Thyroid gland (tissue), 4 donors: ENCODE measurements at regions of chr21 and their contacts with region 1.

Region 1: DNA sequence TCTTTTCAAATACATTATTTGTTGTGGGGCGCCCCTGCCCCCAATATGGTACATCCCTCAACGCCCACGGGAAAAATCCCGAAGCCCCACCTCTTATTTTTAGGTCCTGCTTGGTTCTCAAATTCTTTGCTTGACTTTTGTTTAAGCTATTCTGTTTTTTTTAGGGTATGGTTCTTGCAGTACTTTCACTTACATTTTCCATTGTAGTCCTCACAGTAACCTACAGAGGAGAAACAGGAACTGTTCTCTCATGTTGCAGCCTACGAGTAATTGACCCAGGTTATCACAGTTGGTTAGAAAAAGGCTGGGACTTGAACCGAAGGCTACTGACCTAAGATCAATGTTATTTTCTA is 697 bp upstream of the C21orf91 start:
- DNase-seq: no peak
- H3K4me3 ChIP-seq: peak overlapping the region in 2 of 3 donors; percentile 91 to 99
- H3K27ac ChIP-seq: peak overlapping the region; percentile 91 to 96 (median 94)
- H3K4me1 ChIP-seq: no peaks in the 10 kb centered on the region
- H3K27me3 ChIP-seq: no peaks in the 10 kb centered on the region
- CTCF ChIP-seq: no peak
- POLR2A ChIP-seq: no peak

Region 2: GRCh38 chr21:17537299-17537698 is 282.6 kb before region 1 on chr21:
- intact Hi-C with region 1: no loop called
- DNase-seq: no peak
- H3K4me3 ChIP-seq: no peak overlapping the region
- H3K27ac ChIP-seq: peak overlapping the region in 1 of 3 donors; percentile 6
- H3K4me1 ChIP-seq: peaks cover 16 to 28% of the 10 kb centered on the region in 2 donors
- H3K27me3 ChIP-seq: no peaks in the 10 kb centered on the region
- CTCF ChIP-seq: no peak
- POLR2A ChIP-seq: no peak

Region 3: GRCh38 chr21:17768840-17769446 is 50.9 kb before region 1 on chr21:
- intact Hi-C with region 1: loop called (anchors 10 kb)
- DNase-seq: no peak
- H3K4me3 ChIP-seq: no peak overlapping the region
- H3K27ac ChIP-seq: no peak overlapping the region
- H3K4me1 ChIP-seq: no peaks in the 10 kb centered on the region
- H3K27me3 ChIP-seq: no peaks in the 10 kb centered on the region
- CTCF ChIP-seq: no peak
- POLR2A ChIP-seq: no peak

Region 4: DNA sequence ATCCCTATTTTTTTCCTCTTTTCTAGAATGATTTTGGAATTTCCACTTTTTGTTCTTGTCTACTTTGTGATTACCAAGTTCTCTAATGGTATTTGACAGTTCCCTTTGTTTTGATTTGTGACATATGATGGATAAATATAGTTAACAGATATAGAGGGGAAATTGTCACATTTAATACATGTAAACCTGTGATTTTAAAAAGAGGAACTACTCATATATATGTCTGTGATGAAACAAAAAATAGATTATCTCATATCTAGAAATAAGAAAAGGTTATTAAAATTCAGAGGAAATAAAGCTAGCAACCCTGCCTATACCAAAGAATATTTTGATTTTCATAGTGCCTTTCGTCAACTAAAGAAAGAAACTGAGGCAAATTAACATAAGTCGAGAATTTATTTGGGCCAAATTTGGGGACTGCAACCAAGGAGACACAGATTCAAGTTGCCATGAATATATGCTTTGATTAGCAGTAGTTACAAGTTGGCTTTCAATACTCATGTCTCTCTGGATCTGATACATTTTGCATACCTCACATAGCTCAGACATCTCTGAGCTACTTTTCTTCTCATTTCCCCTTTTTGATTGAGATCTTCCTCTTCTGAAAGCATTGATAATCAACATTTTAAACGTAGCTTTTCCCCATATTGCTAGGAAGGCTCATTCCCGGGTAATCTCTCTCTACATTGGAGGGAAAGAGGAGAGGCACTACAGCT is 14.9 kb after region 1 on chr21:
- intact Hi-C with region 1: no loop called
- DNase-seq: no peak
- H3K4me3 ChIP-seq: no peak overlapping the region
- H3K27ac ChIP-seq: no peak overlapping the region
- H3K4me1 ChIP-seq: no peaks in the 10 kb centered on the region
- H3K27me3 ChIP-seq: no peaks in the 10 kb centered on the region
- CTCF ChIP-seq: no peak
- POLR2A ChIP-seq: no peak

Region 5: DNA sequence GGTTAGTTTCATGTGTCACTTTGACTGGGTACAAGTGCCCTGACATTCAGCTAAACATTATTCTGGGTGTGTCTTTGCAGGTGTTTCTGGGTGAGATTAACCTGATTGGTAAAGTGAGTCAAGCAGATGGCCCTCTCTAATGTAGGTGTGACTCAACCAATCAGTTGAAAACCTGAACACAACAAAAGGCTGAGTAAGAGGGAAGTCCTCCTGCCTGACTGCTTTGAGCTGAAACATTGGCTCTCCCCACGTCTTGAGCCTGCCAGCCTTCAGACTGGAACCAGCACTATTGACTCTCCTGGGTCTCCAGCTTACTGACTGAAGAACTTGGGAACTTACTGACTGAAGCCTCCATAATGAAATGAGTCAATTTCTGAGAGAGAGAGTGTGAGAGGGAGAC is 69.3 kb after region 1 on chr21:
- intact Hi-C with region 1: no loop called
- DNase-seq: no peak
- H3K4me3 ChIP-seq: no peak overlapping the region
- H3K27ac ChIP-seq: no peak overlapping the region
- H3K4me1 ChIP-seq: no peaks in the 10 kb centered on the region
- H3K27me3 ChIP-seq: no peaks in the 10 kb centered on the region
- CTCF ChIP-seq: no peak
- POLR2A ChIP-seq: no peak